ENCODE measurements at regions of chr10 and their contacts with region 1.

Region 1: DNA sequence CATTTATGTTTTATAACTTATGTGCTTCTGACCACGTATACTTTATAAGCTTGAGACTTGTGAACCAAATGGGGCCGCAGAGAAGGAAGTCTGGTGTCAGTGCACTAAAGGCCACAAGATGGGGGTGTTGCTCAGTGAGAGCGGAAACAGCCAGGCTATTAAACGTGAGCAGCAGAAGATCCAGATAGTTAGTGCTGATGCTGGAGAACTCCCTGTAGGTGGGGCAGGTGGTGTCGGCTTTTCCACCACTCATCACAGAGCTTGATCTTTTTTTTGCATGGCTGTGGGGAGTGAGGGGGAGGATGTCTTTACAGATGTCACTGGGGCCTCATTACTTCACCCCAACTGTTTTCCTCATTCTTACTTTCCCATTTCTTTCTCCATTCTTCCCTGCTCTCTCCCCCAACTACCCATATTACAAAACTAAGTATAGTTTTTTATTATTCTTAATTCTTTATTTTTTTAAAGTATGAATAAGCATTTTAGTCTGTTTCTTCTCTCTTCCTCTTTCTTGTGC is 34.7 kb downstream of the ACADSB start:
- DNase-seq: peak in 8 of 9 donors; percentile 11 to 50 (median 36)
- ATAC-seq: peak; percentile 70
- H3K4me3 ChIP-seq: no peak overlapping the region
- H3K4me3 Mint-ChIP-seq: no peak overlapping the region
- H3K27ac ChIP-seq: no peak overlapping the region
- H3K27ac Mint-ChIP-seq: no peak overlapping the region
- H3K4me1 ChIP-seq: no peaks in the 10 kb centered on the region
- H3K4me1 Mint-ChIP-seq: peaks cover 0 to 10% (median 6%) of the 10 kb centered on the region in 7 donors
- H3K27me3 ChIP-seq: no peaks in the 10 kb centered on the region
- H3K27me3 Mint-ChIP-seq: no peaks in the 10 kb centered on the region

Region 2: GRCh38 chr10:121838931-121839330 is 1204.5 kb before region 1 on chr10:
- CTCF ChIA-PET with region 1: no interaction called
- POLR2A ChIA-PET with region 1: no interaction called
- intact Hi-C with region 1: no loop called
- DNase-seq: no peak
- ATAC-seq: no peak
- H3K4me3 ChIP-seq: no peak overlapping the region
- H3K4me3 Mint-ChIP-seq: no peak overlapping the region
- H3K27ac ChIP-seq: no peak overlapping the region
- H3K27ac Mint-ChIP-seq: no peak overlapping the region
- H3K4me1 ChIP-seq: no peaks in the 10 kb centered on the region
- H3K4me1 Mint-ChIP-seq: peaks cover 0 to 25% (median 15%) of the 10 kb centered on the region in 7 donors
- H3K27me3 ChIP-seq: no peaks in the 10 kb centered on the region
- H3K27me3 Mint-ChIP-seq: no peaks in the 10 kb centered on the region

Region 3: GRCh38 chr10:123272171-123272570 is 228.7 kb after region 1 on chr10:
- CTCF ChIA-PET with region 1: no interaction called
- POLR2A ChIA-PET with region 1: no interaction called
- intact Hi-C with region 1: loop called in 1 of 2 experiments (anchors 10 kb)
- DNase-seq: peak in 5 of 9 donors; percentile 7 to 31 (median 15)
- ATAC-seq: no peak
- H3K4me3 ChIP-seq: no peak overlapping the region
- H3K4me3 Mint-ChIP-seq: no peak overlapping the region
- H3K27ac ChIP-seq: no peak overlapping the region
- H3K27ac Mint-ChIP-seq: peak overlapping the region in 1 of 9 donors; percentile 7
- H3K4me1 ChIP-seq: no peaks in the 10 kb centered on the region
- H3K4me1 Mint-ChIP-seq: peaks cover 0 to 11% (median 5%) of the 10 kb centered on the region in 7 donors
- H3K27me3 ChIP-seq: peaks cover 0 to 11% of the 10 kb centered on the region in 2 donors
- H3K27me3 Mint-ChIP-seq: peaks cover 17 to 31% (median 24%) of the 10 kb centered on the region in 5 donors

Region 4: GRCh38 chr10:123380497-123381085 is 337.1 kb after region 1 on chr10:
- CTCF ChIA-PET with region 1: interaction called, 3 read pairs
- POLR2A ChIA-PET with region 1: no interaction called
- intact Hi-C with region 1: loop called in 1 of 2 experiments (anchors 2 kb)
- DNase-seq: peak in 3 of 9 donors; percentile 6 to 13 (median 10)
- ATAC-seq: no peak
- H3K4me3 ChIP-seq: no peak overlapping the region
- H3K4me3 Mint-ChIP-seq: no peak overlapping the region
- H3K27ac ChIP-seq: no peak overlapping the region
- H3K27ac Mint-ChIP-seq: no peak overlapping the region
- H3K4me1 ChIP-seq: no peaks in the 10 kb centered on the region
- H3K4me1 Mint-ChIP-seq: peaks cover 0 to 3% (median 0%) of the 10 kb centered on the region in 7 donors
- H3K27me3 ChIP-seq: no peaks in the 10 kb centered on the region
- H3K27me3 Mint-ChIP-seq: peaks cover 0 to 25% (median 5%) of the 10 kb centered on the region in 5 donors

Region 5: GRCh38 chr10:123559066-123559822 is 515.8 kb after region 1 on chr10:
- CTCF ChIA-PET with region 1: interaction called, 4 read pairs
- POLR2A ChIA-PET with region 1: no interaction called
- intact Hi-C with region 1: loop called (anchors 1 kb)
- DNase-seq: peak; percentile 31 to 76 (median 49)
- ATAC-seq: peak; percentile 78
- H3K4me3 ChIP-seq: no peak overlapping the region
- H3K4me3 Mint-ChIP-seq: no peak overlapping the region
- H3K27ac ChIP-seq: no peak overlapping the region
- H3K27ac Mint-ChIP-seq: peak overlapping the region in 1 of 9 donors; percentile 20
- H3K4me1 ChIP-seq: no peaks in the 10 kb centered on the region
- H3K4me1 Mint-ChIP-seq: peaks cover 0 to 6% (median 0%) of the 10 kb centered on the region in 7 donors
- H3K27me3 ChIP-seq: no peaks in the 10 kb centered on the region
- H3K27me3 Mint-ChIP-seq: peaks cover 3 to 23% (median 20%) of the 10 kb centered on the region in 5 donors

Region 6: GRCh38 chr10:123967396-123968243 is 924.2 kb after region 1 on chr10:
- CTCF ChIA-PET with region 1: no interaction called
- POLR2A ChIA-PET with region 1: no interaction called
- intact Hi-C with region 1: loop called in 1 of 2 experiments (anchors 5 kb)
- DNase-seq: peak in 6 of 9 donors; percentile 5 to 58 (median 22)
- ATAC-seq: peak; percentile 45
- H3K4me3 ChIP-seq: no peak overlapping the region
- H3K4me3 Mint-ChIP-seq: no peak overlapping the region
- H3K27ac ChIP-seq: no peak overlapping the region
- H3K27ac Mint-ChIP-seq: peak overlapping the region in 1 of 9 donors; percentile 16
- H3K4me1 ChIP-seq: no peaks in the 10 kb centered on the region
- H3K4me1 Mint-ChIP-seq: peaks cover 0 to 10% (median 0%) of the 10 kb centered on the region in 7 donors
- H3K27me3 ChIP-seq: peaks cover 0 to 14% of the 10 kb centered on the region in 2 donors
- H3K27me3 Mint-ChIP-seq: peaks cover 44 to 85% (median 70%) of the 10 kb centered on the region in 5 donors